Heart right ventricle (tissue), 16 donors: ENCODE measurements at regions of chr2 and their contacts with region 1.

Region 1: GRCh38 chr2:33441235-33441810 is 35.1 kb upstream of the RASGRP3 start:
- DNase-seq: peak in 1 of 2 donors; percentile 72
- ATAC-seq: peak; percentile 57 to 89 (median 83)
- H3K4me3 ChIP-seq: no peak overlapping the region
- H3K27ac ChIP-seq: peak overlapping the region in 5 of 10 donors; percentile 8 to 82 (median 75)
- H3K4me1 ChIP-seq: peaks cover 0 to 69% (median 24%) of the 10 kb centered on the region in 9 donors
- H3K27me3 ChIP-seq: no peaks in the 10 kb centered on the region
- CTCF ChIP-seq: peak; percentile 46 to 85 (median 67)

Region 2: DNA sequence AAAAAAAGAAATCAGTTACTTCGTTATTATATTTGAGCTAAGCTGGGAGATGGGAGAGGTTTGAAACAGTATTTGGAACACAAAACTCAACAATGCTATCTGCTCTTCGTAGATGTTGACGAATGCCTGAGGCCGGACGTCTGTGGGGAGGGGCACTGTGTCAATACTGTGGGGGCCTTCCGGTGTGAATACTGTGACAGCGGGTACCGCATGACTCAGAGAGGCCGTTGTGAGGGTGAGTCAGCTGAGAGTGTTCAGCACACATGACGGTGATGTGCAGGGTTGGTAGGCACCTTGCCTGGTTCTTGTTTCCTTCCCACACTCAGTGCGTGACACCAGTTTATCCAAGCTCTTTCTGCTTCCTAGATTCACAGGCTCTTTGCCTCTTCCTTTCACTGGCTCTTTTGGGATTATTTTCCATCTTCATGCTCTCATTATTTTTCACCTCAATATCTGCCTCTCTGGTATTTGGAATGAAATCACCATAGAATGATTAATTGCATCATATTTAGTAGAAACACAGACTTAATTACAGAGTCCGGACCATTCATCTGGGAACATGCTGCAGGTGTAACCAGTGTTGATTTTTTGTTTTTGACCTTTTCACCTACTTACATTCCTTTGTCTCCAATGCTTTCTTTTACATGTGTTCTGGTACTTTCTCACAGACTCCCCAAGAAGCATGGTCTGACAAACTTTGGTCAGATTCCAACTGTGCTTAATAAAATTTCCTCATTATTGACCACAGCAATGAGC is 165.5 kb before region 1 on chr2:
- intact Hi-C with region 1: loop called in 1 of 10 experiments (anchors 10 kb)
- DNase-seq: peak in 1 of 2 donors; percentile 25
- ATAC-seq: peak; percentile 13 to 87 (median 58)
- H3K4me3 ChIP-seq: no peak overlapping the region
- H3K27ac ChIP-seq: peak overlapping the region in 4 of 10 donors; percentile 13 to 71 (median 51)
- H3K4me1 ChIP-seq: peaks cover 0 to 32% (median 3%) of the 10 kb centered on the region in 9 donors
- H3K27me3 ChIP-seq: no peaks in the 10 kb centered on the region
- CTCF ChIP-seq: no peak

Region 3: GRCh38 chr2:33298233-33298632 is 143.1 kb before region 1 on chr2:
- intact Hi-C with region 1: loop called in 1 of 10 experiments (anchors 5 kb)
- DNase-seq: no peak
- ATAC-seq: peak in 3 of 8 donors; percentile 31 to 50 (median 36)
- H3K4me3 ChIP-seq: no peak overlapping the region
- H3K27ac ChIP-seq: peak overlapping the region in 6 of 10 donors; percentile 36 to 54 (median 41)
- H3K4me1 ChIP-seq: peaks cover 0 to 31% (median 26%) of the 10 kb centered on the region in 9 donors
- H3K27me3 ChIP-seq: no peaks in the 10 kb centered on the region
- CTCF ChIP-seq: no peak

Region 4: DNA sequence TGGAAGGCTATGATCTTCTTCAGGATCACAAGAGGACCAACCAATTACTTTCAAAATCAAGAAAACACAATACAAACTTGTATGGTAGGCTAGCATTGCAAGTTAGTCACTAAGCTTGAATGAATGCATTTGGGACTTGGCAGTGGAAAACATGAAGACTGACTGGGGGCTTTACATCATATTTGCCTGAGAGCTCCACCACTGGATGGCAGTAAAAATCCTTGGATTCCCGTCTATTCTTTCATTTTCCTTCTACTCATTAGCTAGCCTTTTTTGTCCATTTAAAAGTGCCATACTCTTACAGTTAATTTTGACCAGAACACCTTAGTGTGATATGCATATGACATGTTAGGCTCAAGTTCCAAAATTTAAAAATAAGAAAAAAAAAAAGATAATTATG is 28.4 kb before region 1 on chr2:
- intact Hi-C with region 1: loop called in 3 of 10 experiments (anchors 2 kb)
- DNase-seq: peak in 1 of 2 donors; percentile 35
- ATAC-seq: peak in 7 of 8 donors; percentile 35 to 64 (median 58)
- H3K4me3 ChIP-seq: no peak overlapping the region
- H3K27ac ChIP-seq: no peak overlapping the region
- H3K4me1 ChIP-seq: peaks cover 0 to 13% (median 0%) of the 10 kb centered on the region in 9 donors
- H3K27me3 ChIP-seq: no peaks in the 10 kb centered on the region
- CTCF ChIP-seq: peak in 8 of 9 donors; percentile 25 to 75 (median 58)

Region 5: DNA sequence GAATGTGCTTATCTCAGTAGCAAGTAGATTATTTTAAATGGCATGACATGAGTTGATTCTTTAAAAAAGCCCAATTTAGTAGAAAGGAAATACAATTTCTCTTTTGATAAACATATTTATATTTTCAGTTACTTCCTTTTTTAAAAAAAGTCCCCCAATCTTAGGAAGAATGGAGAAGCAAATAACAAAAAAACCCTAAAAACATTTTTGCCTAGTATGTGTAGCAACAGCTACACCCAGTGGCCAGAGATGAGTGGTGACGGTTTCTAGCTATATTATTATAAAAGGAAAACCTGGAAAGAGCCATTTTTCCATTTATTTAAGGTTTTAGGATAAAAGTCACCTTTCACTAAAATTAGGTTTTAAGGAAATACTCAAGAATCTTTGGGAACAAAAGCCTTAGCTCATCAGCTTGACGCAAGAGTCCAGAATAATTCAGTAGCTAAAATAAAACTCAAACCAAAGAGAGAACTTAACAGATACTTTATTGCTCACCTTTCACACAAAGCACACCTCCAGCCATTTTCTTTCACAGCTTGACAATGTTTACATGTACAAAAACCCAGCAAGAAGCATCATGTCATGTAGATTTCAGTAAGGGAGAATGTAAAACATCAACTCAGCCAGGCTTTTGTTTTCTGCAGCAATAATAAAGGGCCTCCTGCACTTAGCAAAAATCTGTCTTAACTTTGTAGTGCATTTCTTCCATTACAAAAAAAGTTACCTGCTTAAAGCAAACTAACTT is 142.0 kb after region 1 on chr2:
- intact Hi-C with region 1: loop called in 1 of 10 experiments (anchors 10 kb)
- DNase-seq: peak in 1 of 2 donors; percentile 27
- ATAC-seq: peak in 4 of 8 donors; percentile 41 to 67 (median 50)
- H3K4me3 ChIP-seq: no peak overlapping the region
- H3K27ac ChIP-seq: peak overlapping the region in 2 of 10 donors; percentile 3 to 32
- H3K4me1 ChIP-seq: peaks cover 0 to 27% (median 13%) of the 10 kb centered on the region in 9 donors
- H3K27me3 ChIP-seq: no peaks in the 10 kb centered on the region
- CTCF ChIP-seq: peak; percentile 73 to 89 (median 81)